RWPE1 (cell line): ENCODE measurements at regions of chr12 and their contacts with region 1.

Region 1: GRCh38 chr12:117025481-117026151 is 73.6 kb downstream of the TESC start:
- DNase-seq: peak; percentile 70
- H3K27ac ChIP-seq: peak overlapping the region; percentile 42; the same call in 1 of the 2 replicates
- CTCF ChIP-seq: peak; percentile 85

Region 2: DNA sequence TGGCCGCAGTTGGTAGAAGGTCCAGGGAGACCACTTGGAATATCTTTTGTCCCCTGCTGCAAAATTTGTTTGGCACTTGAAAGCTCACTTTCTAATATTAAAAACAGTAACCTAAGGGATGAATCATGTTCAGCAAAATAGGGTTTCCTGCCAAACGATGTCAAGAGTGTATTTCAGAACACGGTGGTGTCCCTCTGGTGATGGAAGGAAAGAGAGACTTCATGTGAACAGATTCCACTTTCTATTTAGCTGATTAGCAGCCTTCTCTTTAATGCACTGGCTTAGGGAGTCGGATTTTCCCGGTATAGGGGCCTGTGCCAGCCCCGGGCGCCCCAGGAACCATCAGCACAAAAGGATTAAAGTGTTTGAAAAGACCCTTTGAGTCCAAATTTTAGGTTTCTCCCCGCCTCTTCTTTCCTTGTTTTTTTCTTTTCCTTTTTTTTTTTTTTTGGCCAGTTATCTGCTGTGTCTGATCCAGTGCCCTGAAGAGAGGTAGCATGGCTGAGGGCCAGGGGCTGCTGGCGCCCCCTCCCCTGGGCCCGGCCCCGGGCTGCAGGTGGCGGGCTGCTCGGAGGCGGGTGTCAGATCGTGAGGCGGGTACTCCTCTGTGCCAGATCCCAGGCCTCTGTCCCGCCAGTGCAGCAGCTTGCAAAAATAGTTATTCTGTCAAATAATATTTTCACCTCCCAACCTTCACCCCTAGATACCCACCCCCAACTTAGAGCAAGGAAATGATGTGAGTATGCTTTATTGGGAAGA is 14.7 kb before region 1 on chr12:
- CTCF ChIA-PET with region 1: no interaction called
- POLR2A ChIA-PET with region 1: no interaction called
- DNase-seq: no peak
- H3K27ac ChIP-seq: peak overlapping the region; percentile 47; the same call in 1 of the 2 replicates
- CTCF ChIP-seq: no peak

Region 3: DNA sequence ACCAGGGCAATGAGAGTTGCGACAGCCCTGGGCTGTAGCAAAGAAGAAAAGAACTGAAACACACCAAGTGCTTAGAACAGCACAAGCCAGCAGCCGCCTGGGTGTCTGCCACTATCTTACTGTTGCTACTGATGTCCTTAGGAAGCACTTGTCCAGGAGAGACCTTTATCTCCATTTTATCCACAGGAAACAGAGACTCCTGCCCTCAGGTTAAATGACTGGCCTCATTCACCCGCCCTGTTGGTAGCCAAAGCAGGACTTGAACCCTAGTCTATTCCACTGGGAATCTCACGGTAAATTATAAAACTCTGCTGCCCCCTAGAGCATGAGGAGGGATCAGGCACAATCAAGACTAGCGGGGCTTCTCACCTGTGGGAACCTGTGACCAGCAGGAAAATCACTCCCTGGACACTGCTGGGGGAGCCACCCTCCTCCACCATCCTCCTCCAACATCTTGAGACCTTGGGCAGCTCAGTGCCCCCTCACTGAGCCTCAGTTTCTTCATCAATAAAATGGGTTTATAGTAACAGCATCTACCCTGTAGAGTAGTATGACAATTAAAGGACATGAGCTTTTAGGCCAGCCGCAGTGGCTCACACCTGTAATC is 94.1 kb after region 1 on chr12:
- CTCF ChIA-PET with region 1: interaction called, 12 read pairs
- POLR2A ChIA-PET with region 1: no interaction called
- DNase-seq: peak; percentile 41
- H3K27ac ChIP-seq: no peak overlapping the region
- CTCF ChIP-seq: peak; percentile 59